IMR-90 (cell line): ENCODE measurements at regions of chr7 and their contacts with region 1.

Region 1: GRCh38 chr7:15709978-15710377 is 23.5 kb upstream of the MEOX2 start:
- DNase-seq: no peak
- ATAC-seq: no peak
- H3K4me3 ChIP-seq: no peak overlapping the region
- H3K27ac ChIP-seq: no peak overlapping the region
- H3K4me1 ChIP-seq: no peaks in the 10 kb centered on the region
- H3K27me3 ChIP-seq: no peaks in the 10 kb centered on the region
- CTCF ChIP-seq: no peak
- POLR2A ChIP-seq: no peak
- RAD21 ChIP-seq: no peak

Region 2: GRCh38 chr7:15389073-15389472 is 320.9 kb before region 1 on chr7:
- CTCF ChIA-PET with region 1: no interaction called
- POLR2A ChIA-PET with region 1: no interaction called
- dilution Hi-C with region 1: no loop called
- in situ Hi-C with region 1: no loop called
- intact Hi-C with region 1: no loop called
- DNase-seq: no peak
- ATAC-seq: no peak
- H3K4me3 ChIP-seq: no peak overlapping the region
- H3K27ac ChIP-seq: no peak overlapping the region
- H3K4me1 ChIP-seq: no peaks in the 10 kb centered on the region
- H3K27me3 ChIP-seq: no peaks in the 10 kb centered on the region
- CTCF ChIP-seq: no peak
- POLR2A ChIP-seq: no peak
- RAD21 ChIP-seq: no peak

Region 3: GRCh38 chr7:15503603-15504290 is 206.2 kb before region 1 on chr7:
- CTCF ChIA-PET with region 1: no interaction called
- POLR2A ChIA-PET with region 1: no interaction called
- dilution Hi-C with region 1: no loop called
- in situ Hi-C with region 1: no loop called
- intact Hi-C with region 1: no loop called
- DNase-seq: peak; percentile 15
- ATAC-seq: peak; percentile 72
- H3K4me3 ChIP-seq: no peak overlapping the region
- H3K27ac ChIP-seq: no peak overlapping the region
- H3K4me1 ChIP-seq: 0 out of 2 replicates have a peak, but pooled peaks cover 1% of the 10 kb centered on the region
- H3K27me3 ChIP-seq: no peaks in the 10 kb centered on the region
- CTCF ChIP-seq: no peak
- POLR2A ChIP-seq: no peak
- RAD21 ChIP-seq: no peak

Region 4: GRCh38 chr7:15675379-15675778 is 34.6 kb before region 1 on chr7:
- CTCF ChIA-PET with region 1: no interaction called
- POLR2A ChIA-PET with region 1: no interaction called
- dilution Hi-C with region 1: no loop called
- in situ Hi-C with region 1: no loop called
- intact Hi-C with region 1: loop called (anchors 5 kb)
- DNase-seq: no peak
- ATAC-seq: no peak
- H3K4me3 ChIP-seq: no peak overlapping the region
- H3K27ac ChIP-seq: no peak overlapping the region
- H3K4me1 ChIP-seq: no peaks in the 10 kb centered on the region
- H3K27me3 ChIP-seq: no peaks in the 10 kb centered on the region
- CTCF ChIP-seq: no peak
- POLR2A ChIP-seq: no peak
- RAD21 ChIP-seq: no peak

Region 5: GRCh38 chr7:15764851-15765382 is 54.9 kb after region 1 on chr7:
- CTCF ChIA-PET with region 1: no interaction called
- POLR2A ChIA-PET with region 1: no interaction called
- dilution Hi-C with region 1: no loop called
- in situ Hi-C with region 1: no loop called
- intact Hi-C with region 1: no loop called
- DNase-seq: no peak
- ATAC-seq: no peak
- H3K4me3 ChIP-seq: no peak overlapping the region
- H3K27ac ChIP-seq: no peak overlapping the region
- H3K4me1 ChIP-seq: no peaks in the 10 kb centered on the region
- H3K27me3 ChIP-seq: no peaks in the 10 kb centered on the region
- CTCF ChIP-seq: no peak
- POLR2A ChIP-seq: no peak
- RAD21 ChIP-seq: no peak